Mammary epithelial cell (primary cell): ENCODE measurements at regions of chr15 and their contacts with region 1.

Region 1: DNA sequence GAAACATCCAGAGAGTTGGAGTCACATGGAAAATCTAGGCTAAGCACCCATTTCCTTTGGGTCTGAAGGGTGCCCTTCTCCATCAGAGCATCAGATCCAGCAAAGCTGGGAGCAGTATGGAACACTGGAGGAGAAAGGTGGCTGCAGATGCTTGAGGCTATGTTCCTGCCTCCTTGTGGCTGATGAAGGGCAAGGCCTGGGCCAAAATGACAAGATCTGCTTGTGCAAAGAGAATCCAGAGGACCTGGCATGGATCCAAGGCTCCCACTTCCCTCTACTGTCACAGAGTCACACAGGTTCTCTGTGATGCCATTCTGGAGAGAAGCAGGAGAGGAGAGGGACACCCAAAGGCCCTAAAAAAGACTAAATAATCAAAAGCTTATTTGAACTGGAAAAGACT is 9.2 kb upstream of the ATP8B4 start:
- DNase-seq: no peak
- H3K4me3 ChIP-seq: no peak overlapping the region
- H3K27ac ChIP-seq: no peak overlapping the region
- H3K4me1 ChIP-seq: no peaks in the 10 kb centered on the region
- H3K27me3 ChIP-seq: no peaks in the 10 kb centered on the region
- CTCF ChIP-seq: no peak

Region 2: DNA sequence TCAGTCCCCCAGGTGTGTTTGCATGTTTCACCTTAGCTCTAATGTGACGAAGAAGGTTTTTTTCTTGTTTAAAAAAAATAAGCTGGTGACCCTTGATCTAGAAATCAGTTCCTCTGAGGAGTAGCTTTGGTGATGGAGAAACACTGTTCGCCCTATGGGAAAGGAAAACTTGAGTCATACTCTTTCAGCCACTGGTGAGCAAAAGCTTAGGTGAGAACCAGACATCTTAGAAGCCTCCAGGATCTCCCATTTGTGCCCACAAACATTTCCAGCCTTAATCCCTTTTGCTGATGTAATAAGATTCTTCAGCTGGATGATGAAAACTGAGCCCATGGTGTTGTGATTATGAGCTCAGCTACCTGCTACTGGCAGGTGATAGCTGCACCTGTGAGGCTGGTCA is 91.6 kb after region 1 on chr15:
- CTCF ChIA-PET with region 1: no interaction called
- dilution Hi-C with region 1: loop called (anchors 5 kb)
- in situ Hi-C with region 1: no loop called
- intact Hi-C with region 1: no loop called
- DNase-seq: peak; percentile 54
- H3K4me3 ChIP-seq: no peak overlapping the region
- H3K27ac ChIP-seq: no peak overlapping the region
- H3K4me1 ChIP-seq: no peaks in the 10 kb centered on the region
- H3K27me3 ChIP-seq: no peaks in the 10 kb centered on the region
- CTCF ChIP-seq: no peak